ENCODE measurements at regions of chr17 and their contacts with region 1.

Region 1: GRCh38 chr17:1573916-1574696 is 11.5 kb upstream of the PITPNA start:
- DNase-seq: peak; percentile 90
- H3K4me3 ChIP-seq: no peak overlapping the region
- H3K27ac ChIP-seq: no peak overlapping the region
- H3K4me1 ChIP-seq: peaks cover 16% of the 10 kb centered on the region
- H3K27me3 ChIP-seq: no peaks in the 10 kb centered on the region
- CTCF ChIP-seq: peak; percentile 93

Region 2: GRCh38 chr17:1629647-1630310 is 55.7 kb after region 1 on chr17:
- intact Hi-C with region 1: loop called (anchors 5 kb)
- DNase-seq: peak; percentile 92
- H3K4me3 ChIP-seq: peak overlapping the region; percentile 85
- H3K27ac ChIP-seq: peak overlapping the region; percentile 94
- H3K4me1 ChIP-seq: peaks cover 4% of the 10 kb centered on the region
- H3K27me3 ChIP-seq: no peaks in the 10 kb centered on the region
- CTCF ChIP-seq: peak; percentile 75

Region 3: DNA sequence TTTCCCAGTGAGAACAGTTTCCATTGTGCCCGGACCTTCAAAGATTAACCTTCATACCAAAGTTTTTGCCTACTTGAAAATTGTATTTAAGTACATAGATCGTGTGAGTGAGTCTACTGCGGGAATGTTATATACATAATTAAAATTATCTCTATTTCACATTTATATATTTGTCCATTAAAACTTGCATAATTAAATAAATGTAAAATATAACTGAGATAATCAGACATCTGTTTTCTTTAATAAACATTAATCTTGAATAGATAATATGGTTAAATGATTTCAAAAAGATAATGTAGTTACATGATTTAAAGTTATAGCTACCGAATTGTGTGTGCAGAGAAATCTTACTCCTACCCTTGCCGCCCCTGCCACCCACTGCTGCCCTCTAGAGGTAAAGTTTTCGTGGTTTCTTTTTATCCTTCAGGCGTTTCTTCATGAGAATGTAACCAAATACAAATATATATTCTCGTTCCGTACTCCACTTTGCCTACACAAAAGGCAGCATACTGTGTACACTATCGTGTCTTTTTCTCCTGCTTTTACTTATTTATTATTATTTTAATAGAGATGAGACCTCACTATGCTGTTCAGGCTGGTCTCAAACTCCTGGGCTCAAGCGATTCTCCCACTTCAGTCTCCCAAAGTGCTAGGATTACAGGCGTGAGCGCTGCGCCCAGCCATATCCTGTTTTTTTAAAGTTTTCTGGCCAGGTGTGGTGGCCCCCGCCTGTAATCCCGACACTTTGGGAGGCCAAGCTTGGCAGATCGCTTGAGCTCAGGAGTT is 291.3 kb after region 1 on chr17:
- intact Hi-C with region 1: no loop called
- DNase-seq: peak; percentile 63
- H3K4me3 ChIP-seq: no peak overlapping the region
- H3K27ac ChIP-seq: no peak overlapping the region
- H3K4me1 ChIP-seq: no peaks in the 10 kb centered on the region
- H3K27me3 ChIP-seq: no peaks in the 10 kb centered on the region
- CTCF ChIP-seq: peak; percentile 64

Measured in colonic mucosa (tissue), 4 donors.